PC-3 (cell line): ENCODE measurements at regions of chr2 and their contacts with region 1.

Region 1: GRCh38 chr2:69709290-69709689 is 32.6 kb upstream of the ANXA4 start:
- DNase-seq: no peak
- ATAC-seq: no peak
- H3K4me3 ChIP-seq: no peak overlapping the region
- H3K27ac ChIP-seq: no peak overlapping the region
- H3K4me1 ChIP-seq: peaks cover under 1% of the 10 kb centered on the region; the same call in 1 of the 2 replicates
- H3K27me3 ChIP-seq: no peaks in the 10 kb centered on the region
- CTCF ChIP-seq: no peak

Region 2: GRCh38 chr2:69559442-69560146 is 149.7 kb before region 1 on chr2:
- CTCF ChIA-PET with region 1: no interaction called
- POLR2A ChIA-PET with region 1: no interaction called
- intact Hi-C with region 1: loop called (anchors 1 kb)
- DNase-seq: peak; percentile 80
- ATAC-seq: peak; percentile 72
- H3K4me3 ChIP-seq: no peak overlapping the region
- H3K27ac ChIP-seq: no peak overlapping the region
- H3K4me1 ChIP-seq: peaks cover 16% of the 10 kb centered on the region; the same call in 1 of the 2 replicates
- H3K27me3 ChIP-seq: no peaks in the 10 kb centered on the region
- CTCF ChIP-seq: peak; percentile 93

Region 3: DNA sequence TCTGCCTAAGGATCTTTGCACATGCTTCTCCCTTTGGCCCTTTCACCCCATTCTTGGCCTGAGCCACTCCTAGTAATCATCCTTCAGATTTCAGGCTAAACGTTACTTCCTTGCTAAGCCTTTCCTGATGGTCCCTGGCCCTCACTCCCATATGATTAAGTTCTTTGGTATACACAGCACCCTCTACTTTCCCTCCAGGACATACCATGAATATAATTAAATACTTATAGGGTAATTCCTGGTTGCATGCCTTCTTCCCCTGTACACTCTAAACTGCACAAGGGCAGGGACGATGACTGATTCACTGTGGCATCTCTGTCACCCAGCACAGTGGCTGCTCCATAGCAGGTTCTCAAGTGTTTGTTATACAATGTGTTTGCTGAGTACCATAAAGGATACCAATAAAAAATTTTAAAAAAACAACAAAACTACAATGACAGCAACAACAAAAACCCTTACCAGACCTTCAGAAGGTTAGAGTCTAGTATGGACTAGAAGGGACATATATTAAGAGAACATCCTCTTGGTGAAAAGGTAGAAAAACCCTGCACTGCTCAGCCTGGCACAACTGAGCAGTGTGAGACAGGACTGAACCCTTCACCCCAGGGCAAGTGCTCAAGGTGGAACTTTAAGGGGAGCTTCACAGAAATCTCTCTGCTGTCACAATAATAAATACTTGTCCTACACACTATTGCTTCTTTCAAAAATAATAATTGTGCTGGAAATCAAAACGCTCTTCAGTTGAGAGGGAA is 142.0 kb before region 1 on chr2:
- CTCF ChIA-PET with region 1: no interaction called
- POLR2A ChIA-PET with region 1: no interaction called
- intact Hi-C with region 1: loop called (anchors 2 kb)
- DNase-seq: peak; percentile 89
- ATAC-seq: peak; percentile 84
- H3K4me3 ChIP-seq: no peak overlapping the region
- H3K27ac ChIP-seq: peak overlapping the region; percentile 83
- H3K4me1 ChIP-seq: peaks cover 73% of the 10 kb centered on the region
- H3K27me3 ChIP-seq: no peaks in the 10 kb centered on the region
- CTCF ChIP-seq: 0 out of 2 replicates have a peak, but pooled peaks have one; percentile 17